ENCODE measurements at regions of chr11 and their contacts with region 1.

Region 1: DNA sequence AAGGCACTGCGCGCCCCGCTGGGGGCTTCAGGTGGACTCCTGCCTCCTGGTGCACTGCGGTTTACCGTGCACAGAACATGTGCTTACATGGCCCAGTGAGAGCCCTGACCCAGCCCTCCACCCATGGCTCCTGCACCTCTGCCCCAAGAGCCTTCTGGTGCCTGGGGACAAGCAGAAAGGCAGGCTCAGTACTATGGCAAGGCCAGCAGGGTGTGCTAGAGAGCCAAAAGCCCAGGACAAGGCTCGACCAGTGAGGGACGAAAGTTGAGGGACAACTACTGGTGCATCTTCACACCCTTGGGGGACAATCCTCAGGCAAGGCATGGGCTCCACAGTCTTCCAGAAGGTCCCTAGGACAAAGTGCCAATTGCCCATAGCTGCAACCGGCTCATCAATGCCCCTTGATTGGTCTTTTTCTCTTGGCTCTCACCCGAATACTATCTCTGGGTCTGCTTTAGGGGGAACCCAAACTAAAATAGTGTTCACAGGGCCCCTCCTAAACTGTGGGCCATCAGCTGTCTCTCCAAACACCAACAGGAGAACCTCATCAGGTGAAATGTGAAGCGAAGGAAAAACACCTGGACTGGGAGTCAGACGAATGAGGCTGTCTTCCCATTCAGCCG is 13.5 kb downstream of the PGA5 start:
- DNase-seq: peak; percentile 48 to 71 (median 65)
- H3K4me3 ChIP-seq: no peak overlapping the region
- H3K27ac ChIP-seq: no peak overlapping the region
- H3K4me1 ChIP-seq: peaks cover 2% of the 10 kb centered on the region
- H3K27me3 ChIP-seq: no peaks in the 10 kb centered on the region
- CTCF ChIP-seq: peak; percentile 58 to 67 (median 59)
- EP300 ChIP-seq: no peak
- POLR2A ChIP-seq: no peak

Region 2: GRCh38 chr11:61071208-61071681 is 183.3 kb before region 1 on chr11:
- intact Hi-C with region 1: no loop called
- DNase-seq: peak in 2 of 5 donors; percentile 20 to 37
- H3K4me3 ChIP-seq: no peak overlapping the region
- H3K27ac ChIP-seq: peak overlapping the region; percentile 45 to 95
- H3K4me1 ChIP-seq: peaks cover 17% of the 10 kb centered on the region
- H3K27me3 ChIP-seq: no peaks in the 10 kb centered on the region
- CTCF ChIP-seq: no peak
- EP300 ChIP-seq: no peak
- POLR2A ChIP-seq: no peak

Region 3: GRCh38 chr11:61201476-61201875 is 53.0 kb before region 1 on chr11:
- intact Hi-C with region 1: no loop called
- DNase-seq: no peak
- H3K4me3 ChIP-seq: no peak overlapping the region
- H3K27ac ChIP-seq: no peak overlapping the region
- H3K4me1 ChIP-seq: no peaks in the 10 kb centered on the region
- H3K27me3 ChIP-seq: no peaks in the 10 kb centered on the region
- CTCF ChIP-seq: no peak
- EP300 ChIP-seq: no peak
- POLR2A ChIP-seq: no peak

Region 4: DNA sequence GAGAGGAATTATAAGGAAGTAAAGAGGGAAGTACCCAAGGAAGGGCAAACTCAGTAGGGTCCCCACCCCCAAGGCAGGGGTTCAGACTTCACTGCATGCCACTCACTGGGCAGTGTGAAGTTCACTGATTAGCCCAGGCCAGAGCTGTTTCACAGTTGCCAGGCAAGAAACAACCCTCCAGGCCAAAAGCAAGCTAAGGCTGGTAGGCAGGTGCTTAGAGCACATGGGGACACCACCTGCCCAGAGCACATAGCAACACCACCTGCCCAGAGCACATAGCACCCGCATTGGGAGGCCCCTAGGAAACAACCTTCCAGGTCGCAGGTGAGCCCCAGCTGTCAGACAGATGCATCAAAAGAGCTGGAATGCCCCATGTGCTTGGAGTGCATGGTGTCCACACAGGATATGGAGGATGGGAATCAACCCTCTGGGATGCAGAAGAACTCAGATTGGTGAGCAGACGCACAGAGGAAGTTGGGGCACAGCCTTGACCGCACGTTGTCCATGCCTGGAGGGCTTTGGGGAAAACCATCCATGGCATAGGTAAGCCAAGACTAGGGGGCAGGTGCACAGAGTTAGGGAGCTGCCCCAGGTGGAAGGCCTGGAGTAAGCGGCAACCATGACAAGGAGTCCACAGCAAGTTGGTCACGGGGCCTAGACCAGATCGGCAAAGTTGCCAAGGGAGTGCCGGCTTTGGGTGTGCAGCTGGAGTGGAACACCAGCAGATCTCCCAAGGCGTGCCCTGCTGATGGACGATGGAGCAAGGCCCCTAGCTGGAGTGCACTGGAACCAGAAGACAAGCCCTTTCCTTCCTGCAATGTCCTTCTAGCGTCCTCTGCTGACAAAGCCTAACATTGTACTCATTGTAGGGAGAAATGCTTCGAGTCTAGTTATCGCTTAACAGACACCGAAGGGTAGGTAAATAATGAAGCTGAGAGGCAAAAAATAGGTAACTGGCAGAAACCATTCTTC is 130.0 kb after region 1 on chr11:
- intact Hi-C with region 1: loop called in 1 of 4 experiments (anchors 10 kb)
- DNase-seq: no peak
- H3K4me3 ChIP-seq: no peak overlapping the region
- H3K27ac ChIP-seq: no peak overlapping the region
- H3K4me1 ChIP-seq: peaks cover 2% of the 10 kb centered on the region
- H3K27me3 ChIP-seq: no peaks in the 10 kb centered on the region
- CTCF ChIP-seq: no peak
- EP300 ChIP-seq: no peak
- POLR2A ChIP-seq: no peak

Region 5: GRCh38 chr11:61392981-61393595 is 138.6 kb after region 1 on chr11:
- intact Hi-C with region 1: loop called in 2 of 4 experiments (anchors 10 kb)
- DNase-seq: no peak
- H3K4me3 ChIP-seq: peak overlapping the region; percentile 76
- H3K27ac ChIP-seq: peak overlapping the region; percentile 18 to 49
- H3K4me1 ChIP-seq: peaks cover 10% of the 10 kb centered on the region
- H3K27me3 ChIP-seq: no peaks in the 10 kb centered on the region
- CTCF ChIP-seq: no peak
- EP300 ChIP-seq: no peak
- POLR2A ChIP-seq: no peak